ENCODE measurements at regions of chr22 and their contacts with region 1.

Region 1: DNA sequence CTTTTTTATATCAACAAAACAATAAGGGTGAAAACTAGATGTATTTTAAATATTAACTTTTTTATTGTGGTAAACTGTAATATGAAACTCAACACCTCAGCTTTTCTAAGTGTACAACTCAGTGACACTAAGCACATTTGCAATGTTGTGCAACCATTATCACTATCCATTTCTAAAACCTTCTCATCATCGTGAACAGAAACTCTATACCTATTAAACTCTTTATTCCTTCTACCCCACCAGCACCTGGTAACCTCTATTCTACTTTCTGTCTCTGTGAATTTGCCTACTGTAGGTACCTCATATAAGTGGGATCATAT is 9.4 kb downstream of the HORMAD2 start:
- DNase-seq: no peak
- ATAC-seq: no peak
- H3K4me3 ChIP-seq: no peak overlapping the region
- H3K4me3 Mint-ChIP-seq: no peak overlapping the region
- H3K27ac ChIP-seq: no peak overlapping the region
- H3K27ac Mint-ChIP-seq: no peak overlapping the region
- H3K4me1 ChIP-seq: peaks cover 3% of the 10 kb centered on the region
- H3K4me1 Mint-ChIP-seq: peaks cover 8% of the 10 kb centered on the region
- H3K27me3 ChIP-seq: no peaks in the 10 kb centered on the region
- H3K27me3 Mint-ChIP-seq: no peaks in the 10 kb centered on the region
- CTCF ChIP-seq: no peak

Region 2: GRCh38 chr22:29587938-29588699 is 501.5 kb before region 1 on chr22:
- CTCF ChIA-PET with region 1: no interaction called
- POLR2A ChIA-PET with region 1: interaction called, 4 read pairs
- intact Hi-C with region 1: loop called (anchors 2 to 5 kb)
- DNase-seq: peak in 1 of 14 experiments; percentile 31
- ATAC-seq: no peak
- H3K4me3 ChIP-seq: no peak overlapping the region
- H3K4me3 Mint-ChIP-seq: no peak overlapping the region
- H3K27ac ChIP-seq: no peak overlapping the region
- H3K27ac Mint-ChIP-seq: no peak overlapping the region
- H3K4me1 ChIP-seq: peaks cover 12% of the 10 kb centered on the region
- H3K4me1 Mint-ChIP-seq: peaks cover 11% of the 10 kb centered on the region
- H3K27me3 ChIP-seq: no peaks in the 10 kb centered on the region
- H3K27me3 Mint-ChIP-seq: no peaks in the 10 kb centered on the region
- CTCF ChIP-seq: no peak

Region 3: DNA sequence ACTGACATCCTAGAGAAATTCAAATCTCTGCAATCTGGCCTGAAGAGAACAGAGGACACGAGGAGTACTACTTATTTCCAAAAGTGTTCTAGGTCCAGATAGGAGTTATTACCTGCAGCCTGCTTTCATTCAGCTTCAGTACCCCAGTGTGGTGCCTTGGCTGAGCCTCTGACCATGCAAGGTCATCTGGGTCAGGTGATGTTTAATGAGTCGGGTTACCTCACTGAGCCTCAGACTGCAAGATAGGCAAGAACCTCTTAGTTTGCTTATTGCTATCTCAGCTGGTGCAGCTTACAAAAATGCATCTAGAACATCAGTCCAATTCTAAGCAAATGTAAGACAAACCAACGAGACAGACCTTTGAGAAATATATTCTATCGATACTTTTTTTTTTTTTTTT is 495.7 kb before region 1 on chr22:
- CTCF ChIA-PET with region 1: no interaction called
- POLR2A ChIA-PET with region 1: interaction called, 4 read pairs
- intact Hi-C with region 1: loop called (anchors 2 to 5 kb)
- DNase-seq: no peak
- ATAC-seq: no peak
- H3K4me3 ChIP-seq: no peak overlapping the region
- H3K4me3 Mint-ChIP-seq: no peak overlapping the region
- H3K27ac ChIP-seq: no peak overlapping the region
- H3K27ac Mint-ChIP-seq: no peak overlapping the region
- H3K4me1 ChIP-seq: peaks cover 12% of the 10 kb centered on the region
- H3K4me1 Mint-ChIP-seq: peaks cover 11% of the 10 kb centered on the region
- H3K27me3 ChIP-seq: no peaks in the 10 kb centered on the region
- H3K27me3 Mint-ChIP-seq: no peaks in the 10 kb centered on the region
- CTCF ChIP-seq: no peak

Region 4: DNA sequence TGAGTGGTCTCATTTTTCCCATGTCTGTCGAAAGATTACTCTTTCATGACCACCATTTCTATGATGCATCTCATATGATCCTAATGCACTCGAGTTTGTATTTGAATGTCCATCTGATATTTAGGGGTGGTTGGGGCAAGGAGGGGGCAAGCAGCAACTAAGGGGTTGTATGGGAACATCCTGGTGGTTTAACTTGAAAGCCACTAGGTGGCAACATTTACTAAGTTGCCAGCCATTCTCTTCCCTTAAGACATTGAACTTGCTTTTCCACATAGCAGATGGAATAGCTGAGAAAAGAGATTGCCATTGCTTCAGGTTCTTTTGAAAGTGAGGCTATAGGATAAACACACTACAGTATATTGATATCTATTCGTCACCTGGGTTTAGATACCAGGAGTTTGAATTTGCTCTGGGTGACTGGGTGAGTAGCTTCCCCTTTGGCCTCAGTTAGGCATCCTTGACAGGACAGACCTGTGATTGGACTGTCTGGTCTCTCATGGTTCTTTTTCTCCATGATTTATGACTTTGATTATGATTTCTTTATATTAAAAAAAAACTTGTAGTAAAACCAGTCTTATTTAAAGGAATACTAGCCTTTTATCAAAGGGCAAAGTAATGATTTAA is 453.8 kb before region 1 on chr22:
- CTCF ChIA-PET with region 1: no interaction called
- POLR2A ChIA-PET with region 1: no interaction called
- intact Hi-C with region 1: loop called (anchors 1 to 5 kb)
- DNase-seq: peak in 4 of 14 experiments; percentile 5 to 50 (median 39)
- ATAC-seq: no peak
- H3K4me3 ChIP-seq: no peak overlapping the region
- H3K4me3 Mint-ChIP-seq: no peak overlapping the region
- H3K27ac ChIP-seq: no peak overlapping the region
- H3K27ac Mint-ChIP-seq: no peak overlapping the region
- H3K4me1 ChIP-seq: no peaks in the 10 kb centered on the region
- H3K4me1 Mint-ChIP-seq: peaks cover 47% of the 10 kb centered on the region
- H3K27me3 ChIP-seq: no peaks in the 10 kb centered on the region
- H3K27me3 Mint-ChIP-seq: no peaks in the 10 kb centered on the region
- CTCF ChIP-seq: peak; percentile 52

Region 5: DNA sequence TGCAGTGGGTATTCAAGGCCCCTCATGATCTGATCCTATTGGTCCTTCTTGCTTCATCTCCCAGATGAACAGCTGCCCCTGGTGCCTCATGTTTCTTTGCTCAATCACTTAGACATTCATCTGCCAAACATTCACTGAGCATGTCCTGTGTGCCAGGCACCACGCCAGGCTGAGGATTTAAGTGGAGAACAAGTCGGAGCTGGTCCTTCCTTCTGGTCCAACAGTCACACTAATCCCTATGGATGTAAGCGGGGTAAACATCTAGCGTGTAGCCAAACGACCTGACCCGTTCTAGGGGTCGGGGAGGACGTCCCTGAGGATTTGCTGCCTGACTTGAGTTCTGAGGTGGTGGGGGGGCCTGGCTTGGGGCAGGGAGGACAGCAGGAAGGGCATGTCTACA is 344.7 kb before region 1 on chr22:
- CTCF ChIA-PET with region 1: no interaction called
- POLR2A ChIA-PET with region 1: no interaction called
- intact Hi-C with region 1: no loop called
- DNase-seq: no peak
- ATAC-seq: no peak
- H3K4me3 ChIP-seq: no peak overlapping the region
- H3K4me3 Mint-ChIP-seq: no peak overlapping the region
- H3K27ac ChIP-seq: no peak overlapping the region
- H3K27ac Mint-ChIP-seq: no peak overlapping the region
- H3K4me1 ChIP-seq: no peaks in the 10 kb centered on the region
- H3K4me1 Mint-ChIP-seq: no peaks in the 10 kb centered on the region
- H3K27me3 ChIP-seq: no peaks in the 10 kb centered on the region
- H3K27me3 Mint-ChIP-seq: no peaks in the 10 kb centered on the region
- CTCF ChIP-seq: no peak

Region 6: DNA sequence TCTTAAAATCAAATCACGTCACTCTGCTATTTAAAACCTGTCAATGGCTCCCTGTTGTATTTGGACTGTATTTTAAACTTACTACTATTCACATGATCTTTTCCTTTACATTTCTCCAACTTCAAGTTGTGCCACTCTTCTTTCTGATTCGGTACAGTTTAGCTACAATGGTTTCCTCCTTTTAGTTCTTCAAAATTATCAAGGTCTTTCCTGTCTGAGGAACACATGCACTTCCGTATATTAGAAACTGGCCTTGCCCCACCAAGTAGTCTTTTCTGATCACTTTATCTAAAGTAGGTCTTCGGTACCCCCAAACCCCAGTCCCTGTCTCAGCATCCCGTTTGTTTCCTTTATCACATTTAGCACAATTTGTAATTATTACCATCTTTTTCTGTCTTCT is 124.8 kb before region 1 on chr22:
- CTCF ChIA-PET with region 1: no interaction called
- POLR2A ChIA-PET with region 1: no interaction called
- intact Hi-C with region 1: no loop called
- DNase-seq: no peak
- ATAC-seq: no peak
- H3K4me3 ChIP-seq: no peak overlapping the region
- H3K4me3 Mint-ChIP-seq: no peak overlapping the region
- H3K27ac ChIP-seq: no peak overlapping the region
- H3K27ac Mint-ChIP-seq: no peak overlapping the region
- H3K4me1 ChIP-seq: no peaks in the 10 kb centered on the region
- H3K4me1 Mint-ChIP-seq: peaks cover 26% of the 10 kb centered on the region
- H3K27me3 ChIP-seq: no peaks in the 10 kb centered on the region
- H3K27me3 Mint-ChIP-seq: no peaks in the 10 kb centered on the region
- CTCF ChIP-seq: no peak